ENCODE measurements at regions of chr5 and their contacts with region 1.

Region 1: DNA sequence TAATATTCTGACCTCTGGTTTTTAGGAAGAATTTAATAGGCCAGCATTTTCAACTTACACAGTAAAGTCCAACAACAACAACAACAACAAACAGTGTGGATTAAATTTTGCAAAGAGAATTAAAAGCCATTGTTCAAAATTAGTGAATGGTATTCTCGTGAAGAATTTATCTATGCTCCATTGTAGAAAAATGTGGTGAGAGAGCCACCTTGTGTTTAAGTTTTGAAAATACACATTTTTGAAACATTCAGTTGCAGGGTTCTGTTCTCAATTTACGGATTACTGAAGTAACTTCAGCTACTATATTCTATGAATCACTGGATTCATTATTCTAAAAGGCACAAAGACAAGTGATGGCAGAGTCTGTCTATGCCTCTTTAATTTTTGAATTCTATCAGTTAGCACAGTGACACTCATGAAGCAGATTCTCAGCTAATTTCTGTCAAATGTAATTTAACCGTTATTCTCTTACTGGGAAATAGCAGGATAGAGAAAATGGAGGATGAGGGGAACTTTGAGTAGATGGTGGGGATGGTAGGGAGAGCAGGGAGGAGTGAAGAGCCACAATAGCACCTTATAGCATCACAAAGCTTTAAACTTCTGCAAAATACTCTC is 11.0 kb downstream of the CCDC152 start:
- DNase-seq: peak; percentile 26
- CTCF ChIP-seq: peak; percentile 46

Region 2: GRCh38 chr5:41869739-41870626 is 897.6 kb before region 1 on chr5 and contains the start of gene OXCT1:
- in situ Hi-C with region 1: loop called (anchors 25 kb)
- DNase-seq: peak; percentile 91
- CTCF ChIP-seq: no peak

Region 3: DNA sequence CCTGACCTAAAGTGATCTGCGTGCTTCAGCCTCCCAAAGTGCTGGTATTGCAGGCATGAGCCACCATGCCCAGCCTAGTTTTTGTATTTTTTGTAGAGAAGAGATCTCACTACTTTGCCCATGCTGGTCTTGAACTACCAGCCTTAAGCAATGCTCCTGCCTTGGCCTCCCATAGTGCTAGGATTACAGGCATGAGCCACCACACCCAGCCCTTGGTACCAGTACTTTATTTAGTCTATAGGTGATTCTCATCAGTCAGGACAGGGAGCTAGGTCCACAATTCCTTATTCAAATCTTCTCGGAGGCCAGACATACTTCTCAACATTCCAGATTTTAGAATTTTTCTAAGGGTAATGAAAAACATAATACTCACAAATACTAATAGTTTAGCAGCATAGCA is 361.6 kb after region 1 on chr5:
- in situ Hi-C with region 1: no loop called
- DNase-seq: no peak
- CTCF ChIP-seq: no peak